ENCODE measurements at regions of chr4 and their contacts with region 1.

Region 1: DNA sequence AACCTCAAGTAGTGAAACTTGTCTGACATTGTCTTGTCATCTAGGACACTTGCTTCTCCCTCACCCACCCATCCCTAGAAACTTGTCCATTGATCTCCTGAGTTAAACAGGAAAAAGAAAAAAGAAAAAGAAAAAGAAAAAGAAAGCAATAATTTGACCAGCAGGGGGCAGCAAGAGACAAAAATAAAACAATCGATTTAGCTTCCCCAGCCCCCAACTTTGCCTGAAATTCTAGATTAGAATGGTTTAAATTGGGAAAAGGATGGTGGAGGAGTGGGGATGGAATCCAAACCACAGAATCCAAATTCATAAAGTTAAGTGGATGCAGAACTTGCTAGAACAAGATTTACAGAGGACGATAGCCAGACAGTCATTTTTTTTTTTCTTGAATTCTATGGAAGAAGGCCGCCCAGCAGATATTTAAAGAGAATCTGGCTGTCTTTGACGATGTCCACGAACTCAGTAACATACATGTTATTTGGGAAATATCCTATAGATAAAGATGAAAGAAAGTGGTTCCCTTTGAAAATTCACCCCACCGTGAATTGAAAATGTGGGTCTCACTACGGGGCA is 282.9 kb downstream of the USP46 start:
- H3K4me3 ChIP-seq: no peak overlapping the region
- H3K27ac ChIP-seq: no peak overlapping the region
- H3K4me1 ChIP-seq: no peaks in the 10 kb centered on the region; the same call in 1 of the 2 replicates
- CTCF ChIP-seq: 0 out of 2 replicates have a peak, but pooled peaks have one; percentile 24

Region 2: GRCh38 chr4:52545099-52546069 is 169.2 kb after region 1 on chr4:
- CTCF ChIA-PET with region 1: interaction called, 10 read pairs
- POLR2A ChIA-PET with region 1: no interaction called
- H3K4me3 ChIP-seq: no peak overlapping the region
- H3K27ac ChIP-seq: no peak overlapping the region
- H3K4me1 ChIP-seq: no peaks in the 10 kb centered on the region
- CTCF ChIP-seq: peak; percentile 48

Measured in HEK293 (cell line).